ENCODE measurements at regions of chr18 and their contacts with region 1.

Region 1: DNA sequence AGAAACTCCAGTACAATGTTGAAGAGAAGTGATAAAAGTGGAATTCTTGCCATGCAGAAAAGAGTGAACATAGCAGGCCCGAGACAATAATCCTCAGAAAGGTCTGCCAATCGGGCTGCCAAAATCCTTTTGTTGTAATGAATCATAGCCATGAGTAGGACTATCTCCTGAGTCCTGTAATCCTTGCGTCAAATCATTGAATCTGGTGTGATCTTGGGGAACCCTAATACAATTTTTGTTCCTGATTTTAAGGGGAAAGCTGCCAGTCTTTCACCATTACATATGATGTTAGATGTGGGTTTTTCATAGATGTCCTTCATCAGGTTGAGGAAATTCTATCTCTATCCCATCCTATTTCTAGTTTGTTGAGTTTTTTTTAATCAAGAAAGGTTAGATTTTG is 2.2 kb downstream of the TPGS2 start:
- DNase-seq: no peak
- ATAC-seq: no peak
- H3K4me3 ChIP-seq: no peak overlapping the region
- H3K27ac ChIP-seq: no peak overlapping the region
- H3K4me1 ChIP-seq: no peaks in the 10 kb centered on the region
- H3K27me3 ChIP-seq: no peaks in the 10 kb centered on the region
- CTCF ChIP-seq: no peak
- EP300 ChIP-seq: no peak
- POLR2A ChIP-seq: no peak
- RAD21 ChIP-seq: no peak

Region 2: DNA sequence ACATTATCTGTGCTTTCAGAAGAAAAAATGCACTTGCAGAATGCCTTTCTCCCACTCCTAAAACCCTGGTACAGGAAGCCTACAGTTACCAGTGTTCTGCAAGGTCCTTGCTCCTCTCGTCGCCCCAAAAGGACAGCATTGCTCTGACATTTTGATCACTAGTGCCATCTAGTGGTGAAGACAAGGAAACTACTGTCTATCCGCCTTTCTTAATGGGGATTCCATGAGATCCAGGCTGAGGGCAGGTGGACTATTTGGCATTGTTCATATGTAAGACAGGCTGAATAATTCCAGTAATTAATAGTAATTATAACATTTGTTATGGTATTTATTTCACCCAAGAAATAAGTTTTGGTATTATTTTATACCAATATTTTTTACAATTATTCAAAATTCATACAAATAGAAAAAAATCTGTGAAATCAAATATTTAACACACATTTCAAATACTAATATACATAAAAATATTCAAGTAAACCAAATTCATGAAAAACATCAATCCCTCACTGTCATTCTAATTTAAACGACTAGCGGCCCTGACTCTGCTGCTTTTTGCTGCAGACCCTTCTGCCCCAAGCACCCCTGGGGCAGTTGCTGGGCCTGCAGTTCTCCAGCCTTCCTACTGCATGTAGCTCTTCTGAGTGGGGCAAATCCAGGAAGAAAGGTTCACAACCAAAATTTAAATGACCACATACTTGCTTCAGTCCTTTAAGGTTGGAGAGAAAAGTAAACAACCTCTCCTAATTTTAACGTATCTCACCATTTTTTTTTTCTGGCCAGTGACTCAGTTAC is 16.8 kb before region 1 on chr18:
- CTCF ChIA-PET with region 1: interaction called, 16 read pairs
- POLR2A ChIA-PET with region 1: interaction called, 6 read pairs
- RAD21 ChIA-PET with region 1: no interaction called
- SMC1A ChIA-PET with region 1: interaction called, 6 read pairs
- in situ Hi-C with region 1: no loop called
- intact Hi-C with region 1: no loop called
- DNase-seq: peak; percentile 27
- ATAC-seq: peak; percentile 99
- H3K4me3 ChIP-seq: no peak overlapping the region
- H3K27ac ChIP-seq: no peak overlapping the region
- H3K4me1 ChIP-seq: no peaks in the 10 kb centered on the region
- H3K27me3 ChIP-seq: no peaks in the 10 kb centered on the region
- CTCF ChIP-seq: peak; percentile 75 to 86 (median 80)
- EP300 ChIP-seq: no peak
- POLR2A ChIP-seq: no peak
- RAD21 ChIP-seq: peak; percentile 78

Region 3: DNA sequence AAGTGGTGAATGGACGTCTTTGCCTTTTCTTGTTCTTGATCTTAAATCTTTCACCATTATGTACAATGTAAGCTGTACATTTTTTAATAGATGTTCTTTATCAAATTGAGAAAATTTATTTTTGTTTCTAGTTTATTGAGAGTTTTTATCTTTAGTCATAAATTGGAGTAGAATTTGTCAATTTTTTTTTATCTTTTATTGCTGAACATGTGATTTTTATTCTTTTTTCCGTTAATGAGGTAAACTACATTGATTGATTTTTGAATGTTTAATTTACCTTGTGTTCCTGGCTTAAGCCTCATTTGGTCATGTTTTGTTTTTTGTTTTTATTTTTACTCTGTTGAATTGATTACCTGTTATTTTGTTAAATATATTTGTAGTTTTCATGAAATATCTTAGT is 22.1 kb after region 1 on chr18:
- CTCF ChIA-PET with region 1: no interaction called
- POLR2A ChIA-PET with region 1: no interaction called
- RAD21 ChIA-PET with region 1: no interaction called
- SMC1A ChIA-PET with region 1: no interaction called
- in situ Hi-C with region 1: no loop called
- intact Hi-C with region 1: no loop called
- DNase-seq: no peak
- ATAC-seq: no peak
- H3K4me3 ChIP-seq: no peak overlapping the region
- H3K27ac ChIP-seq: no peak overlapping the region
- H3K4me1 ChIP-seq: no peaks in the 10 kb centered on the region
- H3K27me3 ChIP-seq: no peaks in the 10 kb centered on the region
- CTCF ChIP-seq: no peak
- EP300 ChIP-seq: no peak
- POLR2A ChIP-seq: no peak
- RAD21 ChIP-seq: no peak